Activated B cell treated with CpG ODN at 0.5 μM for 24 hours (primary cell): ENCODE measurements at regions of chrX and their contacts with region 1.

Region 1: DNA sequence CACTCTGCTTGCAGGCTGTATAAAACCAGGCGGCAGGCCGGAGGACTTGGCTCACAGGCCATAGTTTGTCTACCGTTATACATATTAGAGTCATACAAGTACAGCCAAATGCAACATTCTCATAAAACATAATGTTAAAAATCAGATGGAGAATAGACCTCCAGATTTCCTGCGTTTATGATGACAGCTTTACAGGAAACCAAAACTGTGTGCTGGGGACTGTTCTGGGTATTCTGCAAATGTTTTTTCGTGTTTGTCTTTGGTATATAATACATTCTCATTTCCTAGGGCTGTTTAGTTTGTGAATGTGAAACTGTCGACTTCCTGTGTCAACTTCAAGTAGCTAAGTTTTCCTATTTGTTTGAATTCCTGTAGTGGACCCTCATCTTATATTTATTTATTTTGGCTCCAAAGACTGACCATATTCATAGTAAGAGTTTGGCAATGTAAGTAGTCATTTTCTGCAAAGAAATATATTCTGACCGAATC is 79.5 kb upstream of the FAM9C start:
- DNase-seq: no peak
- ATAC-seq: no peak
- H3K4me3 Mint-ChIP-seq: no peak overlapping the region
- H3K27ac Mint-ChIP-seq: no peak overlapping the region
- H3K4me1 Mint-ChIP-seq: peaks cover 19% of the 10 kb centered on the region
- H3K27me3 Mint-ChIP-seq: no peaks in the 10 kb centered on the region
- CTCF ChIP-seq: no peak

Region 2: GRCh38 chrX:13110433-13111324 is 13.2 kb before region 1 on chrX:
- CTCF ChIA-PET with region 1: no interaction called
- POLR2A ChIA-PET with region 1: no interaction called
- intact Hi-C with region 1: no loop called
- DNase-seq: no peak
- ATAC-seq: no peak
- H3K4me3 Mint-ChIP-seq: no peak overlapping the region
- H3K27ac Mint-ChIP-seq: no peak overlapping the region
- H3K4me1 Mint-ChIP-seq: no peaks in the 10 kb centered on the region
- H3K27me3 Mint-ChIP-seq: no peaks in the 10 kb centered on the region
- CTCF ChIP-seq: no peak

Region 3: GRCh38 chrX:13180807-13181206 is 56.9 kb after region 1 on chrX:
- CTCF ChIA-PET with region 1: no interaction called
- POLR2A ChIA-PET with region 1: no interaction called
- intact Hi-C with region 1: loop called (anchors 10 kb)
- DNase-seq: no peak
- ATAC-seq: no peak
- H3K4me3 Mint-ChIP-seq: no peak overlapping the region
- H3K27ac Mint-ChIP-seq: no peak overlapping the region
- H3K4me1 Mint-ChIP-seq: no peaks in the 10 kb centered on the region
- H3K27me3 Mint-ChIP-seq: no peaks in the 10 kb centered on the region
- CTCF ChIP-seq: no peak